GM12878 (cell line): ENCODE measurements at regions of chr4 and their contacts with region 1.

Region 1: GRCh38 chr4:77433418-77433733 is 172.2 kb upstream of the CXCL13 start:
- DNase-seq: peak; percentile 7
- ATAC-seq: peak; percentile 90
- H3K4me3 ChIP-seq: no peak overlapping the region
- H3K27ac ChIP-seq: no peak overlapping the region
- H3K4me1 ChIP-seq: no peaks in the 10 kb centered on the region
- H3K27me3 ChIP-seq: no peaks in the 10 kb centered on the region
- CTCF ChIP-seq: peak; percentile 46 to 50 (median 49); a peak in 5 of 6 replicates
- EP300 ChIP-seq: no peak
- POLR2A ChIP-seq: no peak
- RAD21 ChIP-seq: peak; percentile 72

Region 2: GRCh38 chr4:77367638-77368037 is 65.7 kb before region 1 on chr4:
- CTCF ChIA-PET with region 1: interaction called, 3 read pairs
- POLR2A ChIA-PET with region 1: no interaction called
- RAD21 ChIA-PET with region 1: no interaction called
- SMC1A ChIA-PET with region 1: no interaction called
- in situ Hi-C with region 1: no loop called
- intact Hi-C with region 1: loop called (anchors 2 kb)
- DNase-seq: no peak
- ATAC-seq: peak; percentile 25; the same call in 1 of the 3 replicates
- H3K4me3 ChIP-seq: no peak overlapping the region
- H3K27ac ChIP-seq: no peak overlapping the region
- H3K4me1 ChIP-seq: no peaks in the 10 kb centered on the region
- H3K27me3 ChIP-seq: no peaks in the 10 kb centered on the region; a peak in 2 of 4 replicates
- CTCF ChIP-seq: no peak
- EP300 ChIP-seq: no peak
- POLR2A ChIP-seq: no peak
- RAD21 ChIP-seq: no peak

Region 3: DNA sequence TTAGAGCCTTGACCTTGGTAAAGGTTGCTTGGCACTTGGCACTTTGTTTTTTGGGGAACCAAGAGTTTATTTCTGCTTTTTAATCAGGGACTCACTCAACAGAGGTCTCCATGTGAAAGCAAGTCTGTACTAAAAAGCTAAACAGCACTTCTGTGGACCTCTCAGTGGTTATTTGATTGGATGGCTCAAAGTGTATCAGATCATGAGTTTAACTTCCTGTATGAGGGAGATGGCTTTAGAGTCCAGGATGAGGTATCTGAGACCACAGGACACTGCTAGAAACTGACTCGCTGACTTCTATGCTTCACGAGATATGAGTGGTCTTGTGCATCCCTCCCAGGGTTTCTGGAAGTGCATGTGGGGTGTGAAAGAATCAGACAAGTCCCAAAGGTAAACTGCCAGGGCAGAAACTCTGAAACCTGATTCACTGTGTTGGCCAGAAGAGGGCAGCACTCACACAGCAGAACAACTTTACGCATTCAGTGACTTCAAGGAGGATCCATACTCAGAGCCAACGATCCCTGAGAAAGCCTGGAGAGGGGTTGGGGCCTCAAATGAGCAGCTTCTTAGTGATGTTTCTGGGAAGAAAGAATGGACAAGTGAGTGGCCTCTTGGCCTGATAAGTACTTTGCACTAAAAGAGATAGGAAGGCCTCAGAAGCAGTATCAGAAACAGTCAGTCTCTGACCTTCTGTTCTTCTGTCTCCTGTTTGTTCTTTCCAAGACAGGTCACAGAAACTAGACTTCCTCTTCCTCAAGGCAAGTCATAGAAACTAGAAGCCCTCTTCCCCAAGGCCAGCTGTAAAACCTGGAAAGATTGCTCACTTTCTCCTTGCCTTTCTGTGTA is 48.0 kb before region 1 on chr4:
- CTCF ChIA-PET with region 1: interaction called, 6 read pairs
- POLR2A ChIA-PET with region 1: no interaction called
- RAD21 ChIA-PET with region 1: no interaction called
- SMC1A ChIA-PET with region 1: interaction called, 3 read pairs
- in situ Hi-C with region 1: no loop called
- intact Hi-C with region 1: loop called (anchors 1 kb)
- DNase-seq: peak; percentile 15
- ATAC-seq: peak; percentile 93
- H3K4me3 ChIP-seq: no peak overlapping the region
- H3K27ac ChIP-seq: no peak overlapping the region
- H3K4me1 ChIP-seq: no peaks in the 10 kb centered on the region
- H3K27me3 ChIP-seq: no peaks in the 10 kb centered on the region
- CTCF ChIP-seq: peak; percentile 84 to 85 (median 84)
- EP300 ChIP-seq: no peak
- POLR2A ChIP-seq: no peak
- RAD21 ChIP-seq: peak; percentile 89

Region 4: DNA sequence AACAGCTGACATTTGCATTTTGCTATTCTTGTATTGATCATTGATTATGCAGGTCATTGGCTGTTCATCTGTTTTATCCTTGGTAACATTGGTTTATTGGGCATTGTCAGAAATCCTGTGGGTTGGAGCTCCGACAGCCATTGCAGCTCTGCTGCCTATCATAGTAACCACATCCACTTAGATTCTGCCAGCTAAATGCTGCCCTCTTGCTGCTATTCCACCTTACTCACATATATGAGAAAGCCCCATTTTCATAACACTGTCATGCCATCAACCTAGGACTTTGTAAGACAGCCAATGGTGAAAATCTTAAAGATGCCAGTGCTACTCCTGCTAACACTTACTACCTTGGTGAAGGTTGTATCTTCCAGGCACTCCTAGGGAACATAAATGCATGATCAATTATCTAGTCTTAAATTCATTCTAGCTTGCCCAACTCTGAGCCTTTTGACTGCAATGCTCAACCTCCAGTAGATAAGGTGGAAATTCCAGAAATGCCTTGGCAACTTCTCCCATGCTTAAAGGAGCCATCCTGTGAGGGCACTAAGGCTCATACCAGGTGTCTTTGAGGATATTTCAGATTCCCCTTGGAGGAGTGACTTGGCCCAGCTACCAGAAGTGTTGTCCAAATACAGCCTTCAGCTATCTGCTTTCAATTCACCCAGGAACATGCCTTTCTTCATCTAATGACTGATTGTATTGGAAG is 14.9 kb before region 1 on chr4:
- CTCF ChIA-PET with region 1: interaction called, 10 read pairs
- POLR2A ChIA-PET with region 1: no interaction called
- RAD21 ChIA-PET with region 1: no interaction called
- SMC1A ChIA-PET with region 1: no interaction called
- in situ Hi-C with region 1: no loop called
- intact Hi-C with region 1: no loop called
- DNase-seq: no peak
- ATAC-seq: peak; percentile 70; the same call in 2 of the 3 replicates
- H3K4me3 ChIP-seq: no peak overlapping the region
- H3K27ac ChIP-seq: no peak overlapping the region
- H3K4me1 ChIP-seq: no peaks in the 10 kb centered on the region
- H3K27me3 ChIP-seq: no peaks in the 10 kb centered on the region; a peak in 1 of 4 replicates
- CTCF ChIP-seq: peak; percentile 20 to 31 (median 23); a peak in 3 of 6 replicates
- EP300 ChIP-seq: no peak
- POLR2A ChIP-seq: no peak
- RAD21 ChIP-seq: no peak